A673 (cell line): ENCODE measurements at regions of chr3 and their contacts with region 1.

Region 1: GRCh38 chr3:93979833-93980676 is at the start of gene ARL13B:
- DNase-seq: peak; percentile 100
- H3K4me3 ChIP-seq: peak within 1 kb of the TSS; percentile 73
- H3K27ac ChIP-seq: peak within 1 kb of the TSS; percentile 80
- H3K4me1 ChIP-seq: peaks cover 16% of the 10 kb centered on the region
- H3K27me3 ChIP-seq: no peaks in the 10 kb centered on the region
- CTCF ChIP-seq: no peak
- total RNA-seq, gene ARL13B: 18.4 TPM in 2 replicates

Region 2: GRCh38 chr3:93855406-93855805 is 124.6 kb before region 1 on chr3:
- CTCF ChIA-PET with region 1: no interaction called
- POLR2A ChIA-PET with region 1: interaction called, 11 read pairs
- intact Hi-C with region 1: loop called (anchors 10 kb)
- DNase-seq: no peak
- H3K4me3 ChIP-seq: no peak overlapping the region
- H3K27ac ChIP-seq: no peak overlapping the region
- H3K4me1 ChIP-seq: no peaks in the 10 kb centered on the region
- H3K27me3 ChIP-seq: no peaks in the 10 kb centered on the region
- CTCF ChIP-seq: no peak

Region 3: DNA sequence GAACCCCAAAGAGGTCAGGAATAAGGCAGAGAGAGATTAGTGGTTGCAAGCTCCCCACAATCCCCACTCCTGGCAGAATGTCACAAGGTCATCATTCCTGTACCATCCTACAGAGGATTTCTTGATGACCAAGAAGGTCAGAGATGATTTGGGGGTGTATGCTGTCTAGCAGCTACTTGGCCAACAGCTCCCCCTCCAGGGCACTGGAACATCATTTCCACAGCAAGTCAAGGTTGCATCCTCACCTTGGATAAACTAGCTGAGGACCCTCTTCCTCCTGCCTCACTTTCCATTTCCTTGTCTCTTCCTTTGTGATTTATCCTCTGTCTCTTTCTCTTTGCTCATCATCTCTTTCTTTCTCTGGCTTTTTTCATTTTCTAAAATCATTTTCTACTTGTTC is 112.6 kb before region 1 on chr3:
- CTCF ChIA-PET with region 1: no interaction called
- POLR2A ChIA-PET with region 1: no interaction called
- intact Hi-C with region 1: loop called (anchors 10 kb)
- DNase-seq: no peak
- H3K4me3 ChIP-seq: no peak overlapping the region
- H3K27ac ChIP-seq: no peak overlapping the region
- H3K4me1 ChIP-seq: peaks cover 7% of the 10 kb centered on the region
- H3K27me3 ChIP-seq: peaks cover 30% of the 10 kb centered on the region
- CTCF ChIP-seq: peak; percentile 27; the same call in 1 of the 2 replicates

Region 4: GRCh38 chr3:93911206-93911605 is 68.8 kb before region 1 on chr3:
- CTCF ChIA-PET with region 1: no interaction called
- POLR2A ChIA-PET with region 1: no interaction called
- intact Hi-C with region 1: no loop called
- DNase-seq: no peak
- H3K4me3 ChIP-seq: no peak overlapping the region
- H3K27ac ChIP-seq: no peak overlapping the region
- H3K4me1 ChIP-seq: no peaks in the 10 kb centered on the region
- H3K27me3 ChIP-seq: no peaks in the 10 kb centered on the region
- CTCF ChIP-seq: no peak

Region 5: DNA sequence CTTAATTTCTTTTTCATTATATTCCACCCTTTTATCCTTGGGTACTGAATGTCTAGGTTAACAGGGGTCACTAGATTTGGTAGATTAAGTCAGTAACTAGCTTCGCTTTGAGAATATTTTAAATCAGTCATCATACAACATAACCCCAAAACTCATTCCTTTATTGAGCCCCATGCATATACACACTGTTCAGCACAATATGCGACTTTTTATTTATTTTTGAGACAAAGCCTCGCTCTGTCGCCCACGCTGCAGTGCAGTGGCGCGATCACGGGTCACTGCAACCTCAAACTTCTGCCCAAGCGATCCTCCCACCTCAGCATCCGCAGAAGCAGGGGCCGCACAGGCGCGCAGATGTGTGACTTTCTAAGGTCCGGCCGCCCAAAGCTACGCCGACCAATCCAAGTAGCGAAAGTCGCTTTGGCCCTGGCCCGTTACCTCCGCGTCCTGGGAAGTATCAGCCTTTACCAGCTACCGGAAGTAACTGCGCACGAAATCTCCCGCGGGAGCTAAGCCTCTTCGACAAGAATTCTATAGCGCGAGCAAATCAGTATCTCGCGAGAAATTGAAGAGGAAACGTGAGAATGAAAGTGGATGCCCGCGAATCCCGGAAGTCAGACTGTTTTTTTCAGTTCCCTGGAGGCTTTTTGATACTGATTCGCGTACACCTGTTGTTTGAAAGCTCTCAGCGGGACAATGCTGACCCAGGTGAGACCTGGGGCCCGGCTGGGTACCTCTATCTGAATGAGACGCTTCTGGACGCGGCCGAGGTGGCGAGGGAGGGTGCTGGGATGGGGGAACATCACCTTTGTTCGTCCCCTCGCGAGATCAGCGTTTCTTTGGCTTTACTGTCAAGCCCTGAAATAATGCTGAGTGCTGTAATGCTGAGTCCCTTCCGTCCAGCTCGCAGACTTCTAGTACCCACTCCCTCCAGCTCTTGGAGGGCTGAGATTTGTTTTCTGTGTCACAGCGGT is 82.7 kb after region 1 on chr3 and contains the starts of genes DHFR2 and NSUN3:
- CTCF ChIA-PET with region 1: no interaction called
- POLR2A ChIA-PET with region 1: no interaction called
- intact Hi-C with region 1: loop called (anchors 1 kb)
- DNase-seq: peak; percentile 98
- H3K4me3 ChIP-seq: peak within 1 kb of the TSS; percentile 84
- H3K27ac ChIP-seq: peak within 1 kb of the TSS; percentile 97
- H3K4me1 ChIP-seq: peaks cover 14% of the 10 kb centered on the region
- H3K27me3 ChIP-seq: no peaks in the 10 kb centered on the region
- CTCF ChIP-seq: no peak
- total RNA-seq, gene DHFR2: 6.5 and 9.8 TPM in 2 replicates
- total RNA-seq, gene NSUN3: 12.3 and 15.6 TPM in 2 replicates